Endothelial cell of umbilical vein (primary cell): ENCODE measurements at regions of chr9 and their contacts with region 1.

Region 1: GRCh38 chr9:120985810-120986222 is 59.2 kb upstream of the TRAF1 start:
- DNase-seq: peak; percentile 84
- H3K4me3 ChIP-seq: no peak overlapping the region
- H3K27ac ChIP-seq: no peak overlapping the region
- H3K4me1 ChIP-seq: peaks cover 17% of the 10 kb centered on the region
- H3K27me3 ChIP-seq: no peaks in the 10 kb centered on the region
- CTCF ChIP-seq: peak; percentile 54
- POLR2A ChIP-seq: no peak

Region 2: GRCh38 chr9:120936011-120936763 is 49.6 kb before region 1 on chr9:
- CTCF ChIA-PET with region 1: interaction called, 7 read pairs
- POLR2A ChIA-PET with region 1: no interaction called
- dilution Hi-C with region 1: no loop called
- intact Hi-C with region 1: loop called (anchors 1 kb)
- DNase-seq: peak; percentile 95
- H3K4me3 ChIP-seq: no peak overlapping the region
- H3K27ac ChIP-seq: peak overlapping the region; percentile 72
- H3K4me1 ChIP-seq: peaks cover 58% of the 10 kb centered on the region
- H3K27me3 ChIP-seq: no peaks in the 10 kb centered on the region
- CTCF ChIP-seq: peak; percentile 89 to 90
- POLR2A ChIP-seq: no peak

Region 3: DNA sequence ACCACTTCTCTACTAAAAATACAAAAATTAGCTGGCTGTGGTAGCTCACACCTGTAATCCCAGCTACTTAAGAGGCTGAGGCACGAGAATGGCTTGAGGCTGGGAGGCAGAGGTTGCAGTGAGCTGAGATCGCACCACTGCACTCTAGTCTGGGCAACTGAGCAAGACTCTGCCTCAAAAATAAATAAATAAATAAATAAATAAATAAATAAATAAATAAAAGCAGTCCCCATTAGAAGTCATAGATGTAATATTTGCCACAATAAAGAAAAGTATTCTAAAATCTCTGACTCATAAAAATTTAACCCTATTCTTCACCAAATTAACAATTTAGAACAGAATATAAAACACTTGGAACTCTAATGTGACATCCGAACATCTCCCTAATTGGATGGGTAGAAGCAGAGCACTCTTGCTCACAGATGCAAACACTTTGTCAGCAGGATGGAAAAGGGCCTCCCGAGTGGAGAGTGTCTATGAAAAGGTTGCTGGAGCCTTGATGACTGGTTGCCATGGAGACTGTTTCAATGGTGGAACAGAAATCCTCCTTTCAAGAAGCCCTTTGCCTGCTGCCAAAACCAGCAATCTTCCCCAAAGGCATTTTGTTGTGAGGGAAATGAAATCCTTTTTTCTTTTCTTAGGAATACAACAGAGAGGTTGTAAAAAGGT is 20.3 kb before region 1 on chr9:
- CTCF ChIA-PET with region 1: interaction called, 18 read pairs
- POLR2A ChIA-PET with region 1: no interaction called
- dilution Hi-C with region 1: no loop called
- intact Hi-C with region 1: no loop called
- DNase-seq: no peak
- H3K4me3 ChIP-seq: no peak overlapping the region
- H3K27ac ChIP-seq: no peak overlapping the region
- H3K4me1 ChIP-seq: no peaks in the 10 kb centered on the region
- H3K27me3 ChIP-seq: no peaks in the 10 kb centered on the region
- CTCF ChIP-seq: no peak
- POLR2A ChIP-seq: no peak

Region 4: DNA sequence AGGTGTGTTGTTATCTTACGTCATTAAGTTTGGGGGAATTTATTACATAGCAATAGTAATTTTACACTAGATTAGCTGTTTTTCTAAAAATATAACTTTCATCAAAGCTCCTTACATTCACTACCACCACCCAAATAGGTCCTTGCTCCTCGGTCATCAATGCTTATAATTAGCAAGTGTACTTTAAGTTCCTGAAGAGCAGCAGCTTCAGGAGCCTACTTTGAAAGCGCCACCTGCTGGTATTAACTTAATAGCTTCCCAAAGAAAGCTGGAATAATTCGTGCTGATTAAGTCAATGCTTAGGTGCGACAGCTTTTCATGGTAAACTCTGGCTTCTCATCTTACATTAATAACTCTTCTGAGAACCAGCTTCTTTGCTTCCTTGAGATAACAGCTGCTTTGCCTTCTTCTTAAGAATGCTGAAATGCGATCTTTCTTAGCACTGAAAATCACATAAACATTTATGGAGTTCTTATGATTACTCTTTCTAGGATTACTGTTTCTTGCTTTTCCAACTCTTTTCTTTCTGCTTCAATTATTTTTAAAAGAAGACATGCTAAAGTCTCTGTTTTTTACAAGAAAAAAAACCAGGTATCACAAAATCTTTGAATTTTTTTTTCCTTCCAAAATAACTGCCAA is 74.3 kb after region 1 on chr9:
- CTCF ChIA-PET with region 1: interaction called, 305 read pairs
- POLR2A ChIA-PET with region 1: no interaction called
- dilution Hi-C with region 1: no loop called
- intact Hi-C with region 1: loop called (anchors 1 kb)
- DNase-seq: peak; percentile 80
- H3K4me3 ChIP-seq: no peak overlapping the region
- H3K27ac ChIP-seq: no peak overlapping the region
- H3K4me1 ChIP-seq: peaks cover 27% of the 10 kb centered on the region
- H3K27me3 ChIP-seq: no peaks in the 10 kb centered on the region
- CTCF ChIP-seq: peak; percentile 60 to 63
- POLR2A ChIP-seq: no peak

Region 5: GRCh38 chr9:121169094-121169601 is 183.3 kb after region 1 on chr9:
- CTCF ChIA-PET with region 1: interaction called, 4 read pairs
- POLR2A ChIA-PET with region 1: no interaction called
- dilution Hi-C with region 1: no loop called
- intact Hi-C with region 1: loop called (anchors 10 kb)
- DNase-seq: peak; percentile 18
- H3K4me3 ChIP-seq: no peak overlapping the region
- H3K27ac ChIP-seq: no peak overlapping the region
- H3K4me1 ChIP-seq: no peaks in the 10 kb centered on the region
- H3K27me3 ChIP-seq: no peaks in the 10 kb centered on the region
- CTCF ChIP-seq: peak; percentile 45 to 49
- POLR2A ChIP-seq: no peak